ENCODE measurements at regions of chr15 and their contacts with region 1.

Region 1: GRCh38 chr15:81480645-81481053 is 106.6 kb upstream of the TMC3 start:
- DNase-seq: peak; percentile 90

Region 2: DNA sequence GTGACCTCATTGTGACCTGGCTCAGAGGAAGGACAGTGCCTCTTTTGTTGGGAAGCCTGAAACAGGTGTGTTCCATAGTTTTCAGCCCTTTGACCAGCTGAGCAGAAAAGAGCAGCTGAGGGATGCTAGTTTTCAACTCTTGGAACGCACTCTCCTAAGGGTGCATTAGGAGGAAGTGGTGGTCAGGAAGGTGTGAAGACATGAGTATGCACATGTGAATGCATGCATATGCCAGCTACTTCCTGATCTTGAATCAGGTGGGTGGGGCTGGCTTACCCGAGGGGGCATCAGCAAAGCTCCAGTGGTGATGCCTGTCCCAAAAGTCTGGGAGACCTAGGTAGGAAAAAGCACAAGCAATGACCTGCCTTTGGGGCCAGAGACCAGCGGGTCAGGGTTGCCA is 724.8 kb before region 1 on chr15:
- in situ Hi-C with region 1: no loop called
- DNase-seq: no peak

Region 3: DNA sequence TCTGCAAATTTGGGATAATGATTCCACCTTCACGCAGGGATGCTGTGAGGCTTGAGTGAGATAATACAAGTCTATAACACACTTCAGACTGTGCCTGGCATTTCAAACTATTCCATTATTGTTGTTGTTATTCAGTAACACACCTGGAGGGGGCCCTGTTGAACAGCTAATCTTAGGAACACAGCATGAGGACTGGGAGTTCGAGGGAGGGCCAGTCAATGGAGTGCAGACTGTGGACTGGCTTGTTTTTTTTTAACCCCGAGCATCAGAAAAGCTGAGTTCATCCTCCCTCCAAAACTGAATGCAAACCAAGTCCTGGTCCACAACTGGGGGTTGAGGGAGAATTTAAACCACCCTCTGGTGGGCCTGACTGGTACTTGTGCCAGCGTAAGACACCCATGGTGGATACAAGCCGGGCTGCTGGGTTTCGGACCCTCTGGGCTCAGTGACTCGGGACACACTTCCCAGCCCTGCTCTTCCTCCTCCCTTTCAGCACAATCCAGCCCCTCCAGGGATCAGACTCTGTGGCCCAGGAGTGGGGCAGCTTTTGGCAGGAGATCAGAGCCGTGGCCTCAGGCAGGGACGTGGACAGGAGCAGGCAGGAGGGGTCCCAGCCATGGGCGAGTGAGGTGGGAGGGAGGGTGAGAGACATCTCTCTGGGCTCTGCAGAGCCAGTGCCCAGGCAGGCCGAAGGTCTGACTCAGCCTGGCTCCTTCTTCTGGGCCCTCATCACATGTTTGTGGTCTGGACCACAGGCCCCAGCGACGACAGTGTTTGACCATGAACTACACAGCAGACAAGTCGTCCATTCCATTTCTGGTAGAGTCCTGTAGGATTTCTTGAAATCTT is 601.5 kb after region 1 on chr15:
- in situ Hi-C with region 1: loop called (anchors 25 kb)
- DNase-seq: peak; percentile 22

Region 4: GRCh38 chr15:82177291-82178010 is 696.8 kb after region 1 on chr15:
- in situ Hi-C with region 1: no loop called
- DNase-seq: peak; percentile 30

Measured in KBM-7 (cell line).